ENCODE measurements at regions of chr6 and their contacts with region 1.

Region 1: DNA sequence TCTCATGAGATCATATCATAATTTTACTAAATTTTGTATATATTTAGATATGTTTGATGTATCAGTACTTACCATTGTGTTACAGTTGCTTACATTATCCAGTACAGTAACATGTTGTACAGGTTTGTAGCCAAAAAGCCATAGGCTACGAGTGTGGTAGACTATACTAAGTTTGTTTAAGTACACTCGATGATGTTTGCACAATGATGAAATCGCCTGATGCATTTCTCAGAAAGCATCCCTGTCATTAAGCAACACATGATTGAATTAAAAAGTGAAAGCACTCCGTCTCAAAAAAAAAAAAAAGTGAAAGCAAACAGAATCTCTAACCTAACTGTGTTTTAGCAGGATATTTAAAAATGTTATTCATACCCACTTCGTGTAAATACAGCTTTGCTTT is 104.9 kb upstream of the TFAP2D start:
- DNase-seq: no peak
- H3K4me3 ChIP-seq: no peak overlapping the region
- H3K27ac ChIP-seq: no peak overlapping the region
- H3K4me1 ChIP-seq: no peaks in the 10 kb centered on the region
- H3K27me3 ChIP-seq: no peaks in the 10 kb centered on the region
- CTCF ChIP-seq: no peak
- POLR2A ChIP-seq: no peak

Region 2: DNA sequence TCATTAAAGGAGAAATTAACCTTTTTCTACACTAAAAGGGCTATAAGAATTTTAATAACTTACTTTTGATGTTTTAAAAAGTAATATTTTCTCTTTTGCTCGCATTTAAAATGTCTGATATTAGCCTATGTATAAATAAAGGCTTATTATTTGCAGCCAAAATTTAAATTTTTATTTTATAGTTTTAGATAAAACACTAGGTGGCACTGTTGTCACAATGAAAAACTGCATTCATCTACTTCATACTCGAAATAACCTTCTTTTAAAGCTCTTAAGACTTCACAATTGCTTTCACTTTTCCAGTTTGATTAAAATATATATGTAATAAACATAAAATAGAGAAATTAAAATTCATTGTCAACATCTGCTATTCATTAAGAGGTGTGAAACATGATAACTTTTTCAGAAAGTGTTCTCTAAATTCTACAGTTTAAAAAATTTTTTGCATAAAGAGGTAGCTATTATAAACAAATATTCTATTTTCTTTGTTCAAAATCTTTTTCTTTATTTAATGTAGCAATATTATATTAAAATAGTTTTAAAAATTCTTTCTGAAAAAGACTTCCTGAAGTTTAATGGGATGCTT is 479.9 kb before region 1 on chr6:
- intact Hi-C with region 1: loop called (anchors 5 kb)
- DNase-seq: no peak
- H3K4me3 ChIP-seq: no peak overlapping the region
- H3K27ac ChIP-seq: no peak overlapping the region
- H3K4me1 ChIP-seq: no peaks in the 10 kb centered on the region
- H3K27me3 ChIP-seq: peaks cover 0 to 4% (median 0%) of the 10 kb centered on the region in 4 donors
- CTCF ChIP-seq: peak in 3 of 6 experiments; percentile 31 to 43 (median 34)
- POLR2A ChIP-seq: no peak

Measured in esophagus squamous epithelium (tissue), 5 donors.